Psoas muscle (tissue), 8 donors: ENCODE measurements at regions of chr2 and their contacts with region 1.

Region 1: GRCh38 chr2:101831351-101831865 is 133.9 kb downstream of the MAP4K4 start:
- DNase-seq: peak; percentile 62 to 76
- ATAC-seq: peak; percentile 88 to 96 (median 91)
- H3K4me3 ChIP-seq: no peak overlapping the region
- H3K27ac ChIP-seq: no peak overlapping the region
- H3K4me1 ChIP-seq: peaks cover 17% of the 10 kb centered on the region
- H3K27me3 ChIP-seq: no peaks in the 10 kb centered on the region
- CTCF ChIP-seq: peak; percentile 84

Region 2: DNA sequence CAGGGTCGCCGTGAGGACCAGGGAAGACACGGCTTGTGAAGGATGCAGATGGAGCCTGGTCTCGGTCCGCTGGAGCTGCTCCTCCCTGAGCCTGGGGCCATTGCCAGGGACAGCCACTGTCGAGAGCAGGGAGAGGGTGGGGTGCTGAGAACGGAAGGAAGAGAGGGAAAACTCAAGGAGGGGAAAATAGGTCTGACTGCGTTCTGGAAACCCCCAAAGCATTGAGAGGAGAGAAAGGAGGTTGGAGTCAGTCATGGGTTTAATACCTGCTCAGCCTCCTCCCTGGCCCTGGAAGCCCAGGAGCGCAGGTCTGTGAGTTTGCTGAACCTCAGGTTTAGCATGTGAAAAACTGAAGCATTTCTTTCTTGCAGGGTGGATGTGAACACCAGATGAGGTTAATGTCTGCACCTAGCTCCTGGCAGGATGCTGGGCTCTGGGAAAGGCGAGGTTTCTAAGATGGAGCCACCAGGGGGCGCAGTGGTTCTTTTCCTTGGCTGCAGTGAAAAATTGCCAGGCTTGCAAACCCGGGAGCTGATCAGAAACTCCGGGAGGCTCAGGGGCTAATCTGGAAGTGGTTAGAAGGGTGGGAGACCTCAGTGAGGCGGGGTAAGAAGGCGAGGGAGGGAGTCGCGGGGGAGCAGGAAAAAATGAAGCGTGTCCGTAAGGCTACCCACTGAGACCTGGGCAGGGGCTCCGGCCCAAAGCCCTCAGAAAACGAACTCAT is 489.3 kb before region 1 on chr2:
- intact Hi-C with region 1: loop called (anchors 2 to 5 kb)
- DNase-seq: peak; percentile 77 to 83
- ATAC-seq: peak in 3 of 4 donors; percentile 57 to 77 (median 59)
- H3K4me3 ChIP-seq: no peak overlapping the region
- H3K27ac ChIP-seq: no peak overlapping the region
- H3K4me1 ChIP-seq: no peaks in the 10 kb centered on the region
- H3K27me3 ChIP-seq: no peaks in the 10 kb centered on the region
- CTCF ChIP-seq: peak; percentile 81

Region 3: GRCh38 chr2:101419096-101419663 is 412.2 kb before region 1 on chr2:
- intact Hi-C with region 1: loop called (anchors 2 to 5 kb)
- DNase-seq: no peak
- ATAC-seq: peak; percentile 65 to 74 (median 72)
- H3K4me3 ChIP-seq: no peak overlapping the region
- H3K27ac ChIP-seq: no peak overlapping the region
- H3K4me1 ChIP-seq: no peaks in the 10 kb centered on the region
- H3K27me3 ChIP-seq: peaks cover 0 to 3% (median 0%) of the 10 kb centered on the region in 3 donors
- CTCF ChIP-seq: peak; percentile 73

Region 4: DNA sequence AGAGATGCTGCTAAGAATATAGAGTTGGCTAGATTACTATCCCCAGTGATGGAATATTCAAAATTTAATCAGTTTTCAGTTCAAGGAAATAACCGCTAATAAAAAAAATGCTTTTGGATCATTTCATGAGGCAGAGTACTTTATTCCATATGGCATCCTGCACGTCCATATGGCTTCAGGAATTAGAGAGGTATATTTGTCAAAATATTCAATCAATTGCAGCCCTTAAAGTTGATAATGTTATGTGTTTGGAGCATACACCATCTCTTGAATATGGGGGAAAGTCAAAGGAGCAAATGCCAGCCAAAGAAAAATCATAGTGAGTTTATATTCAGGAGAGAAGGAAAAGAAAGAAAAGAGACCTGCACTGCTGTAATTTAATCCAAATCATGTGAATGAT is 1196.8 kb after region 1 on chr2:
- intact Hi-C with region 1: no loop called
- DNase-seq: no peak
- ATAC-seq: no peak
- H3K4me3 ChIP-seq: no peak overlapping the region
- H3K27ac ChIP-seq: no peak overlapping the region
- H3K4me1 ChIP-seq: no peaks in the 10 kb centered on the region
- H3K27me3 ChIP-seq: no peaks in the 10 kb centered on the region
- CTCF ChIP-seq: no peak